ENCODE measurements at regions of chr15 and their contacts with region 1.

Region 1: GRCh38 chr15:40044717-40045571 is 6.0 kb upstream of the SRP14 start:
- DNase-seq: peak; percentile 91
- H3K4me3 ChIP-seq: no peak overlapping the region
- H3K27ac ChIP-seq: peak overlapping the region; percentile 16 to 53
- H3K4me1 ChIP-seq: peaks cover 16% of the 10 kb centered on the region
- H3K27me3 ChIP-seq: no peaks in the 10 kb centered on the region
- CTCF ChIP-seq: peak; percentile 63 to 83 (median 80)
- POLR2A ChIP-seq: no peak

Region 2: DNA sequence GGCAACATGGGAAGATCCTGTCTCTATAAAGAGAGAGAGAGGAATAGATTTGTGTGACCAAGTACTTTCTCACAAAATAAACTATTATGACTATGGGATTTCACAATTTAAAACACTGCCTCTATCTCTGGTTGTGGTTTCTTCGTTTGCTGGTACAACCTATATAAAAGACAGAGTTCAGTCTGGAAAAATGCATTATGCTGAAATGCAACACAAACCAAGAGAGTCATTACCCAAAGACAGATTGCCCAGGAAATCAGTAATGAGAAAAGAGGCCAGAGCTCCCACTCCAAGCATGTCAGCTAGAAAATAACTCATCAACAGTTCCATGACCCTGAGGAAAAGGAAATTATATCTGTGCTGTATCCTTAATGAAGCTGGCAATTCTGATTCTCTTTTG is 148.1 kb before region 1 on chr15:
- intact Hi-C with region 1: no loop called
- DNase-seq: no peak
- H3K4me3 ChIP-seq: no peak overlapping the region
- H3K27ac ChIP-seq: peak overlapping the region in 1 of 2 donors; percentile 68
- H3K4me1 ChIP-seq: peaks cover 3% of the 10 kb centered on the region
- H3K27me3 ChIP-seq: no peaks in the 10 kb centered on the region
- CTCF ChIP-seq: no peak
- POLR2A ChIP-seq: no peak

Region 3: GRCh38 chr15:40108855-40109735 is 64.2 kb after region 1 on chr15 and contains the start of gene BMF:
- intact Hi-C with region 1: loop called (anchors 10 kb)
- DNase-seq: peak; percentile 100
- H3K4me3 ChIP-seq: peak within 1 kb of the TSS; percentile 78 to 88
- H3K27ac ChIP-seq: peak within 1 kb of the TSS; percentile 79 to 86
- H3K4me1 ChIP-seq: peaks cover 31% of the 10 kb centered on the region
- H3K27me3 ChIP-seq: no peaks in the 10 kb centered on the region
- CTCF ChIP-seq: peak in 1 of 3 experiments; percentile 3
- POLR2A ChIP-seq: no peak
- total RNA-seq, gene BMF: 6.9 to 7.7 TPM

Region 4: GRCh38 chr15:40274350-40275274 is 229.7 kb after region 1 on chr15:
- intact Hi-C with region 1: loop called (anchors 5 kb)
- DNase-seq: peak; percentile 90
- H3K4me3 ChIP-seq: no peak overlapping the region
- H3K27ac ChIP-seq: peak overlapping the region in 1 of 2 donors; percentile 59
- H3K4me1 ChIP-seq: peaks cover 58% of the 10 kb centered on the region
- H3K27me3 ChIP-seq: no peaks in the 10 kb centered on the region
- CTCF ChIP-seq: peak; percentile 100
- POLR2A ChIP-seq: no peak